ENCODE measurements at regions of chr9 and their contacts with region 1.

Region 1: GRCh38 chr9:87812375-87813118 is 70.1 kb upstream of the SPATA31E1 start:
- DNase-seq: no peak
- H3K4me3 Mint-ChIP-seq: no peak overlapping the region
- H3K27ac Mint-ChIP-seq: peak overlapping the region; percentile 52
- H3K4me1 Mint-ChIP-seq: peaks cover 32% of the 10 kb centered on the region
- H3K27me3 Mint-ChIP-seq: peaks cover 7% of the 10 kb centered on the region

Region 2: GRCh38 chr9:87336914-87337333 is 475.6 kb before region 1 on chr9:
- intact Hi-C with region 1: loop called (anchors 1 kb)
- DNase-seq: no peak
- H3K4me3 Mint-ChIP-seq: peak overlapping the region; percentile 65
- H3K27ac Mint-ChIP-seq: no peak overlapping the region
- H3K4me1 Mint-ChIP-seq: peaks cover 8% of the 10 kb centered on the region
- H3K27me3 Mint-ChIP-seq: peaks cover 27% of the 10 kb centered on the region

Region 3: GRCh38 chr9:87464110-87464965 is 348.2 kb before region 1 on chr9:
- intact Hi-C with region 1: loop called (anchors 1 kb)
- DNase-seq: no peak
- H3K4me3 Mint-ChIP-seq: peak overlapping the region; percentile 39
- H3K27ac Mint-ChIP-seq: peak overlapping the region; percentile 92
- H3K4me1 Mint-ChIP-seq: peaks cover 18% of the 10 kb centered on the region
- H3K27me3 Mint-ChIP-seq: no peaks in the 10 kb centered on the region

Region 4: GRCh38 chr9:87581513-87581912 is 231.0 kb before region 1 on chr9:
- intact Hi-C with region 1: no loop called
- DNase-seq: no peak
- H3K4me3 Mint-ChIP-seq: no peak overlapping the region
- H3K27ac Mint-ChIP-seq: no peak overlapping the region
- H3K4me1 Mint-ChIP-seq: no peaks in the 10 kb centered on the region
- H3K27me3 Mint-ChIP-seq: peaks cover 1% of the 10 kb centered on the region

Region 5: GRCh38 chr9:87678650-87679515 is 133.7 kb before region 1 on chr9:
- intact Hi-C with region 1: loop called (anchors 2 kb)
- DNase-seq: no peak
- H3K4me3 Mint-ChIP-seq: no peak overlapping the region
- H3K27ac Mint-ChIP-seq: no peak overlapping the region
- H3K4me1 Mint-ChIP-seq: peaks cover 5% of the 10 kb centered on the region
- H3K27me3 Mint-ChIP-seq: no peaks in the 10 kb centered on the region

Region 6: GRCh38 chr9:87725900-87726709 is 86.4 kb before region 1 on chr9 and contains the start of gene CTSL:
- intact Hi-C with region 1: loop called (anchors 5 kb)
- DNase-seq: peak; percentile 40
- H3K4me3 Mint-ChIP-seq: peak within 1 kb of the TSS; percentile 90
- H3K27ac Mint-ChIP-seq: peak within 1 kb of the TSS; percentile 75
- H3K4me1 Mint-ChIP-seq: peaks cover 13% of the 10 kb centered on the region
- H3K27me3 Mint-ChIP-seq: peaks cover 35% of the 10 kb centered on the region
- total RNA-seq, gene CTSL: 13.4 and 14.1 TPM in 2 replicates

Region 7: GRCh38 chr9:87776481-87777379 is 35.8 kb before region 1 on chr9:
- intact Hi-C with region 1: no loop called
- DNase-seq: no peak
- H3K4me3 Mint-ChIP-seq: no peak overlapping the region
- H3K27ac Mint-ChIP-seq: no peak overlapping the region
- H3K4me1 Mint-ChIP-seq: no peaks in the 10 kb centered on the region
- H3K27me3 Mint-ChIP-seq: no peaks in the 10 kb centered on the region

Region 8: GRCh38 chr9:87792831-87793288 is 19.7 kb before region 1 on chr9:
- intact Hi-C with region 1: loop called (anchors 1 kb)
- DNase-seq: peak; percentile 44
- H3K4me3 Mint-ChIP-seq: no peak overlapping the region
- H3K27ac Mint-ChIP-seq: peak overlapping the region; percentile 89
- H3K4me1 Mint-ChIP-seq: peaks cover 55% of the 10 kb centered on the region
- H3K27me3 Mint-ChIP-seq: no peaks in the 10 kb centered on the region